ENCODE measurements at regions of chr14 and their contacts with region 1.

Region 1: DNA sequence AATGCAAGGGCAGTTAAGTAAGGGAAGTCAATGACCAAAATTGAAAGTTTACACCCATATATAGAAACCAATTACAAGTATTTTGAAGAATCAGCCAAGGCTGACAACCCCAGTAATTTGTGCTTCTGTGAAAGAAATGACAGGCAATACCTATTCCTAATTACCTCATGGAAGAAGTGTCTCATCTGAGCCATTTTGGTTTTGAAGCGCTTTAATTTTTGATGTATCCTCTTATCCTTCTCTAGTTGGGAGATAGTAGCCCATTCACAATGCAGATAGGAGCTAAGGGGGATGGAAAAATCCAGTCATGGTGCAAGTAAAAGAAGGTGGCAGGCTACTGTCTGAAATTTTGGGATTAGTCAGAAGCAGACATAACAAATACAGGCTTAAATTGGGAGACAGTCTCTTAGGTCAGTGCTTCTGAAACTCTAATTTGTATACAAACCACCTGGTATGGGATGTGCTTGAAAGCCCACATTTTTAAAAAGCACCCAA is 30.4 kb upstream of the SUPT16H start:
- DNase-seq: no peak
- H3K4me3 ChIP-seq: no peak overlapping the region
- H3K27ac ChIP-seq: no peak overlapping the region
- H3K4me1 ChIP-seq: no peaks in the 10 kb centered on the region
- H3K27me3 ChIP-seq: no peaks in the 10 kb centered on the region
- CTCF ChIP-seq: no peak

Region 2: GRCh38 chr14:21369949-21370679 is 44.1 kb before region 1 on chr14:
- intact Hi-C with region 1: loop called (anchors 5 kb)
- DNase-seq: no peak
- H3K4me3 ChIP-seq: no peak overlapping the region
- H3K27ac ChIP-seq: no peak overlapping the region
- H3K4me1 ChIP-seq: no peaks in the 10 kb centered on the region
- H3K27me3 ChIP-seq: no peaks in the 10 kb centered on the region
- CTCF ChIP-seq: no peak

Measured in colonic mucosa (tissue), 4 donors.